IMR-90 (cell line): ENCODE measurements at regions of chr17 and their contacts with region 1.

Region 1: DNA sequence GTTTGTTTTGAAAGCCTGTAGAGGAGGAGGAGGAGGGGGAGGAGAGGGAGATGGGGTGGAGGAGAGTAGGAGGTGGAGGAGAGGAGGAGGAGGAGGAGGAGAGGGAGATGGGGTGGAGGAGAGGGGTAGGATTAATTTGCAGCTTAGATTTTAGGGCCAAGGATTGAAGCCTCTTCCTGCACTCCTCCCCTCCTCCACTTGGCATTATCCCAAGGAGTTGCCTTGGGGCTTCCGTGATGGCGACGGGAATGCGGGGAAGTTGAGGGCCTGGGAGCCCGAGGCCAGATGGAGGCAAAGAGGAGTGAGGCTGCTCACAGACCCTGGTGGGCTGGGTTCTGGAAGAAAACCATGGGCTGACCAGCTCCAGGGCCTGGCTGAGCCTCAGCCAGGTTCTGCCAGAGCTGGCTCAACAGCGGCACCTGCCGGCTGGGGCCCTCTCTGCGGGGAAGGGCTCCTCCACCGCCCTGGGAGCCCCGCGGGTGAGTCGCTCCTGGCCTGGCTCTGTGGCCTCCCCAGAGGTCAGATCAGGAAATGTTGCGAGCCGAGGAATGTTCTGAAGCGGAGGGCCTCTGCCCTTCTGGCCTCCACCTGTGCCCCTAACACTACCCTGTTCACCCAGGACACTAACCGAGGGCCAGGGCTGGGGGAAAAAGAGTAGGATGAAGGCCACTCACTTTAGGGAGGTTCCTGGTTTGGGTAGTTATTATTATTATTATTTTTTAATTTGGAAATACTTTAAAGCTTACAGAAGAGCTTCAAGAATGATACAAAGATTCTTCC is 23.9 kb upstream of the FMNL1 start:
- DNase-seq: peak; percentile 77
- ATAC-seq: peak; percentile 100
- H3K4me3 ChIP-seq: no peak overlapping the region
- H3K27ac ChIP-seq: peak overlapping the region; percentile 60
- H3K4me1 ChIP-seq: peaks cover 10% of the 10 kb centered on the region
- H3K27me3 ChIP-seq: no peaks in the 10 kb centered on the region
- CTCF ChIP-seq: peak; percentile 100; the same call in 1 of the 2 replicates
- POLR2A ChIP-seq: peak; percentile 54; the same call in 1 of the 2 replicates
- RAD21 ChIP-seq: peak; percentile 100

Region 2: DNA sequence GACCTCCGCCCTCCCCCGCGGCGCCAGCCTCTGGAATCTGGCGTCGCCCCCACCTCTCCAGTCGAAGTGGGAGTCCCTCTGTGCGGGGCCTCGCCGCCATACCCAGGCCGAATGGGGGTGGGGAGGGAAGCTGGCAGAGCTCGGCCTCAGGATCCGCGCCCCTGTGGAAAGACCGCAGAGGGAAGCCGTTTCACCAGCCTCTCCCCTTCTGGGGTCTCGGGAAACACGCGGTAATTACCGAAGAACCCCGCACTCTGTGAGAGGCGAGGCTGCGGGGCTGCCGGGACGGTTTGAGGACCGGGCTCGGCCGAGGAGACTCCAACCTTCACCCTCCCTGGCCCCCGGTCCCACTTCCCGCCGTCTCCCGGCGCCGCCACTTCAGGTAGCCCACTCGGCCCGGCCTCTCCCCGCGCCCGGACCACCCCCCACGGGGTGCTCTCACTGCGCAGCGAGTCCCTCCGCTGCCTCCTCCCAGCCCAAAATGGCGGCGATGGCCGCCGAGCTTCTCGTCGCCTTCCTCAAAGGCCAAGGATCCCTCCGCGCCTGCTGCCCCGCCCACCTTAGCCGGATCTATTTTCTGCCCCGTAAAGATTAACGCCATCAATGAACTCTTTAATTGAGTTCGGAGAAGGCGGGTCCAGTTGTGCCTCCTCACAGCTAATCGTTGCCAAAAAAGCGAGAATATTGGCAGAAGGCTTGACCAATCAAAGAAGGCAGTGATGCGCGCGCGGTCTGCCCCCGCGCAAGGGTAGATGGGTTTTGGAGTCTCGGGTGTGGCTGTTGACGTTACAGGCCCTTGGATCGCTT is 36.5 kb before region 1 on chr17:
- CTCF ChIA-PET with region 1: interaction called, 14 read pairs
- POLR2A ChIA-PET with region 1: interaction called, 4 read pairs
- dilution Hi-C with region 1: no loop called
- in situ Hi-C with region 1: no loop called
- intact Hi-C with region 1: no loop called
- DNase-seq: peak; percentile 100
- ATAC-seq: peak; percentile 94
- H3K4me3 ChIP-seq: peak overlapping the region; percentile 75
- H3K27ac ChIP-seq: peak overlapping the region; percentile 98
- H3K4me1 ChIP-seq: peaks cover 17% of the 10 kb centered on the region
- H3K27me3 ChIP-seq: no peaks in the 10 kb centered on the region
- CTCF ChIP-seq: no peak
- POLR2A ChIP-seq: peak; percentile 95
- RAD21 ChIP-seq: no peak; the same call in 1 of the 2 replicates

Region 3: DNA sequence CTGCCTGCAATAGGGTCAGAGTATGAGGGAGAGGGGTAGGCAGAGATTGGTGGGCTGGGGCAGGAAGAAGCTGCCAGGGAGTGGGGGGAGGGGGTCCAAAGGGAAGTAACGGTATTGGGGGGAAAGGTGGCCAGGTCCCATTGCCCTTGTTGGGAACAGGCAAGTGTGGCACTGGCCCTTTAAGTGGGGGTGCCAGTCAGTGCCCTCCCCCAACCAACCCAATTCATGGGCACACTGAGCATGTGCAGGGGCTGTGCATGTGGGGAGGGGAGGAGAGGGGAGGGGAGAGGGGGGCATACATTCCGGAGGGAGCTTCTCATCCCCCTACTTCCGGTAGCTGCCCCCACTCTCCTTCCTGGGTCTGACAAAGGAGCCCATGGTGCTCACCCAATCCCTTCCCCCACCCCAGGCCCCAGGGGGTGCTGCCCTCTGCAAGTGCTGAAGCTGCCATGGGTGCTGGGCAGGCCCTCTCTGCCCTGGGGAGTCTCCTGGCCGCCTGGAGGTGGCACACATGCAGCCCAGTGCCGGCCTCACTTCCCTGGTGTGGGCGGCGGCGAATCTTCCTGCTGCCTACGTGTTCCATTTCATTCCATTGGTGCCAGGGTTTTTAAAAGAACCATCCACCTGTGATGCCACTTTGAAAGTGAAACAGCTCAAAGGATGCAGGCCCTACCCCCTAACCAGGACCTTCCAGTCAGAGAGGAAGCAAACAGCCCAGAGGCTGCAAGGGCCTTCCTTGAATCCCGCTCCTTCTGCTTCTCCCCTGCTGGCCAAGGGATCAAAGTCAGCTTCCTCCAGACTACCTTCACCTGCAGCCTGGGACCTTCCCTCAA is 25.1 kb before region 1 on chr17:
- CTCF ChIA-PET with region 1: interaction called, 10 read pairs
- POLR2A ChIA-PET with region 1: interaction called, 9 read pairs
- dilution Hi-C with region 1: no loop called
- in situ Hi-C with region 1: no loop called
- intact Hi-C with region 1: no loop called
- DNase-seq: peak; percentile 72
- ATAC-seq: peak; percentile 77
- H3K4me3 ChIP-seq: no peak overlapping the region
- H3K27ac ChIP-seq: peak overlapping the region; percentile 71
- H3K4me1 ChIP-seq: peaks cover 30% of the 10 kb centered on the region
- H3K27me3 ChIP-seq: no peaks in the 10 kb centered on the region
- CTCF ChIP-seq: no peak
- POLR2A ChIP-seq: no peak
- RAD21 ChIP-seq: no peak